Mammary epithelial cell (primary cell): ENCODE measurements at regions of chr6 and their contacts with region 1.

Region 1: DNA sequence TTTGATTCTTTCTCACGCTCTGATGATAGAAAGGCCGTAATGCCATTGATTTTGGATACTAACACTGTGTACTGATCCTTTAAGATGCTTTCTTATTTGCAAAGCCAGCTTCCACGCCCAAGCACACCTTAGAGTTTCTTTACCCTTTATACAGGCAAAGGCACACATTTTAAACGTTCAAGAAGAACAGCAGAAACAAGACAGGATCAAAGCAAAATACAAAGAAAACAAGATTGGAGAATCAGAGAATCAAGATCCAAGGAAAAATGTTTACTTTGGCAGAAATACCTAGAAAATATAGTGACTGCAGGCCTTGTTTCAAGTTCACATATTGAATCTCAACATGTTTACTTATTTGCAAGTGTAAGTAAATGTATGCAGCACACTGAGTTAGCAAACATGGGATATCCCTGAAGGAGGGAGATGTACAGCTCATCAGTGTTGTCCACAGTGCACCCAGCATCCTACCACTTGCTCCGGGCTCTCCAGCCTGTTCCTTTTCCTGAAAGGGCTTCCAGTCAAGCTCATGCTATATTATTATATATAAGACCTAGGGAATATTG is 319.6 kb downstream of the PRL start:
- DNase-seq: no peak
- H3K4me3 ChIP-seq: no peak overlapping the region
- H3K27ac ChIP-seq: no peak overlapping the region
- H3K4me1 ChIP-seq: no peaks in the 10 kb centered on the region
- H3K27me3 ChIP-seq: no peaks in the 10 kb centered on the region
- CTCF ChIP-seq: no peak

Region 2: DNA sequence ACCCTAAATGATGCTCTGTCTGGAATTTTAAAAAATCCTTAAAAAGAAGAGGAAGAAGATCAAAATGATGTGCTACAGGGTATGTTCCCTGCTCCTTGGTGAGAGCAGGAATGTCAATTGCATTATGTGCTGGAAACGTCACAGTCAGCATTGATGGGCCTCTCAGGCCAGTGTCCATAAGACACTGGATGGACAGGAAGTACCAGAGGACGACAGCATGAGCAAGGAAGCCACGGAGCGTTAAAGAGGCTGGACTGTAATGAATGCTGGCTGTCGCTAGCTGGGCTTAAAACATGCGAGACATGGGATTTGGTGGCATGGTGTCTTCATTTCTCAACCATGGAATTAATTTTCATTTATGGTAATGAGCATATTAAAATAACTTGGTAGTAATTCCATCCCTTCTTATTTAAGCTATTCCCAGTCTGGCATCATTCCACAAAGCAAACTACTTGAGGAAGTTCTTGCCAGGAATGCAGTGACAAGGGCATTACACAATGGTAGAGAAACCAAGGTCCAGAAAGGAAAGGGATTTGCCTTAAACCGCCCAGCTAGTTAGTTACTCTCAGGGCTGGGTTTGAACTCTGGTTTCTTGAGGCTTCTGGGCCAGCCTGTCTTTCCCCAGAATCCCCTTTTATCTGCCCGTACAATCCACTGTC is 550.3 kb before region 1 on chr6:
- CTCF ChIA-PET with region 1: no interaction called
- dilution Hi-C with region 1: no loop called
- in situ Hi-C with region 1: no loop called
- intact Hi-C with region 1: no loop called
- DNase-seq: no peak
- H3K4me3 ChIP-seq: no peak overlapping the region
- H3K27ac ChIP-seq: no peak overlapping the region
- H3K4me1 ChIP-seq: no peaks in the 10 kb centered on the region
- H3K27me3 ChIP-seq: no peaks in the 10 kb centered on the region
- CTCF ChIP-seq: no peak

Region 3: GRCh38 chr6:21908161-21908848 is 68.9 kb before region 1 on chr6:
- CTCF ChIA-PET with region 1: no interaction called
- dilution Hi-C with region 1: loop called (anchors 5 kb)
- in situ Hi-C with region 1: no loop called
- intact Hi-C with region 1: no loop called
- DNase-seq: no peak
- H3K4me3 ChIP-seq: no peak overlapping the region
- H3K27ac ChIP-seq: no peak overlapping the region
- H3K4me1 ChIP-seq: no peaks in the 10 kb centered on the region
- H3K27me3 ChIP-seq: no peaks in the 10 kb centered on the region
- CTCF ChIP-seq: no peak